Activated B cell treated with CpG ODN at 0.5 μM for 24 hours (primary cell): ENCODE measurements at regions of chr3 and their contacts with region 1.

Region 1: DNA sequence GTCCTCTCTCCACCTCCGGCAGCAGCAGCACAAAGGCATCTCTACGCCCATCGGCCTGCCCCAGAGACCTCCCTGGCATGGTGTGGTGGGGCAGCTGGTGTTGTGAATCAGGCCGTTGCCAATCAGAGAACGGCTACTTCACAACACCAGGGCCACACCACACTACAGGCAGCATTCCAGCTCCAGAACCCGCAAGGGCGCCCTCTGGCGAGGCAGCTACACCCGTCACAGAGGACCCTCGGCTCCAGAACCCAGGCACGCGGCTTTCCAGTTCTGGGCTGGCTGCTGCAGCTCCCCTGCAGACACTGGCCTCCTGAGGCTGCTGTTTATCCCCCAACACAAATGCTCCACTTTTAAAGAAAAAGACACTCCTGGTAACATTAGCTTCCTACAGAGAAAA is 127.5 kb upstream of the TOPAZ1 start:
- DNase-seq: peak; percentile 43
- ATAC-seq: peak; percentile 72
- H3K4me3 Mint-ChIP-seq: no peak overlapping the region
- H3K27ac Mint-ChIP-seq: no peak overlapping the region
- H3K4me1 Mint-ChIP-seq: no peaks in the 10 kb centered on the region
- H3K27me3 Mint-ChIP-seq: peaks cover 7% of the 10 kb centered on the region
- CTCF ChIP-seq: no peak

Region 2: DNA sequence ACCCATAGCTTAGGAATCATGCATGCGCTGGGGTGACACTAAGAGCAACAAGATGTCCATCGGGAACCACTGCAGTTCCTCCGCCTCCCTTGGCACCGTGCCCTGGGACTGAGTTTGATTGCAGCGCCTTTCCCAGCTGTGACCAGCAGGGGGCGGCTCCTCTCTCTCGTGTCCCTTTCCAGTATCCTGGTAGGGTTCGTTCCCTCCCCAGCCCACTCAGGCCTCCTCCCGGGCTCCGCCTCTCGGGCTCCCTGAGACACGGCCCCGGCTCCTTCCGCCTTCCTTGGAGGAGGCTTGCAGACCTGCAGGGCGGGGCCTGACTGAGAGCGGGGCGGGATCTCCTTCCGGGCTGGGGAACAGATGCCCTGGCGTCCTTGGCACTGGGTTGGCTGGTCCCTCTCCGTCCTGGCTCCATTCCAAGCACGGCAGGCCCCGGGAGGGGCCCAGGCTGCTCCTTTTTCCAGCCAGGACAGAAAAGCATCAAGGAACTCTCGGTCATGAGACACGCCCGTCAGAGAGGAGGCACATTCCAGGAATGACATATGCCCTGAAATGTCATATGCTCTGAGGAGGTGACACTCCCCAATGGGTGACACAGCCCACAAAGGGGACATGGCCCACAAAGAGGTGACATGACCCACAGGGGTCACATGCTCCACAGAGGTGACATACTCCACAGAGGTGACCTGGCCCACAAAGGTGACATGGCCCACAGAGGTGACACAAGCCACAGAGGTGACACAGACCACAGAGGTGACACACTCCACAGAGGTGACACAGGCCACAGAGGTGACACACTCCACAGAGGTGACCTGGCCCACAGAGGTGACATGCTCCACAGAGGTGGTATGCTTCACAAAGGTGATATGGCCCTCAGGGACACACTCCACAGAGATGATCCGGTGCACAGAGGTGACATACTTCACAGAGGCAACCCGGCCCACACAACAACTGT is 344.4 kb before region 1 on chr3:
- CTCF ChIA-PET with region 1: no interaction called
- POLR2A ChIA-PET with region 1: no interaction called
- intact Hi-C with region 1: loop called (anchors 10 kb)
- DNase-seq: peak; percentile 63
- ATAC-seq: peak; percentile 54
- H3K4me3 Mint-ChIP-seq: no peak overlapping the region
- H3K27ac Mint-ChIP-seq: no peak overlapping the region
- H3K4me1 Mint-ChIP-seq: peaks cover 4% of the 10 kb centered on the region
- H3K27me3 Mint-ChIP-seq: peaks cover 19% of the 10 kb centered on the region
- CTCF ChIP-seq: no peak

Region 3: GRCh38 chr3:43855674-43856299 is 258.4 kb before region 1 on chr3:
- CTCF ChIA-PET with region 1: interaction called, 34 read pairs
- POLR2A ChIA-PET with region 1: no interaction called
- intact Hi-C with region 1: loop called (anchors 1 kb)
- DNase-seq: no peak
- ATAC-seq: peak; percentile 71
- H3K4me3 Mint-ChIP-seq: no peak overlapping the region
- H3K27ac Mint-ChIP-seq: no peak overlapping the region
- H3K4me1 Mint-ChIP-seq: peaks cover 4% of the 10 kb centered on the region
- H3K27me3 Mint-ChIP-seq: peaks cover 63% of the 10 kb centered on the region
- CTCF ChIP-seq: no peak

Region 4: GRCh38 chr3:43879166-43879565 is 235.0 kb before region 1 on chr3:
- CTCF ChIA-PET with region 1: interaction called, 7 read pairs
- POLR2A ChIA-PET with region 1: no interaction called
- intact Hi-C with region 1: loop called (anchors 1 kb)
- DNase-seq: no peak
- ATAC-seq: no peak
- H3K4me3 Mint-ChIP-seq: no peak overlapping the region
- H3K27ac Mint-ChIP-seq: no peak overlapping the region
- H3K4me1 Mint-ChIP-seq: no peaks in the 10 kb centered on the region
- H3K27me3 Mint-ChIP-seq: peaks cover 2% of the 10 kb centered on the region
- CTCF ChIP-seq: no peak

Region 5: GRCh38 chr3:44136421-44136820 is 22.3 kb after region 1 on chr3:
- CTCF ChIA-PET with region 1: no interaction called
- POLR2A ChIA-PET with region 1: no interaction called
- intact Hi-C with region 1: no loop called
- DNase-seq: no peak
- ATAC-seq: no peak
- H3K4me3 Mint-ChIP-seq: no peak overlapping the region
- H3K27ac Mint-ChIP-seq: no peak overlapping the region
- H3K4me1 Mint-ChIP-seq: no peaks in the 10 kb centered on the region
- H3K27me3 Mint-ChIP-seq: peaks cover 14% of the 10 kb centered on the region
- CTCF ChIP-seq: no peak